SK-MEL-5 (cell line): ENCODE measurements at regions of chr6 and their contacts with region 1.

Region 1: GRCh38 chr6:110873981-110874879 is at the start of gene AMD1:
- DNase-seq: peak; percentile 96
- total RNA-seq, gene AMD1: 76.4 and 82.0 TPM in 2 replicates

Region 2: DNA sequence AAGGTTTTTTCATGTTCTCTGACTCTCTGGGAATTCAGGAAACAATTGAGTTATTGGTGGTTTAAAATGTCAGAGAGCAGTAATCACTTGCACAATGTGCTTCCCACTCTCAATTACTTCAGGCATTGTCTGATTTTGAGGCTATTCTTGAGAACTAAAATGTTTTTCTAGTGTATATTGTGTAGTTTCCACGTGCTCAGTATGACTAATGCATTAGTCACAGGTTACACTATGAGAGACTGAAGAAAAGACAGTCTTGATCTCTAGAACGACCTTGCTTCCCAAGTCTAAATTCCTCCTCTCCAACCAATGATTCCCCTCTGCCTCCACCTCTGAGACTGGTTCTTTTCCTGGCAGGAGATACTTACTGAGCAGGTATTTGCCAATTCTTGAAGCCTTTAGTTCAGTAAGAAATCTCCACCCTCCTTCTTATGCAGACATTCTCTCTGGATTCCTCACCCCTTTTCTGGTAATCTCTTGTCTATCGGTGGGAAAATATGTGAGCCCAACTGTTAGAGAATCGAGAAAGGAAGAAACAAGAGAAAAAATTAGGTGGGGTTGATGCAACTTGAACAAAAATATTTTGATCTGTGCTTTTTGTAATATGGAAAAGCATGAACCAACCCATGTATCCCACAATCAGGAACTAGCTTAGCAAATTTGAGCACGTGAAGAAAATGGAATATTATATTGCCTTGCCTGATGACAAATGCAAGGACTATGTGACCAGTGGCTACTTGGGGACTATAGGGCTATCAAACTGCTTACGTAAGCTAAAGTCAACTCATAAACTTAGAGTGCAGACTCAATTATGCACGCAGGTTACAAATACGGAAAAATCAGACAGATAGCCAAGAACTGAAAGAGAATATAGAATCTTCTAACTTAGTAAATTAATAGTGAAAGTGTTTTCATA is 336.8 kb before region 1 on chr6:
- in situ Hi-C with region 1: loop called (anchors 10 kb)
- DNase-seq: peak; percentile 94

Region 3: DNA sequence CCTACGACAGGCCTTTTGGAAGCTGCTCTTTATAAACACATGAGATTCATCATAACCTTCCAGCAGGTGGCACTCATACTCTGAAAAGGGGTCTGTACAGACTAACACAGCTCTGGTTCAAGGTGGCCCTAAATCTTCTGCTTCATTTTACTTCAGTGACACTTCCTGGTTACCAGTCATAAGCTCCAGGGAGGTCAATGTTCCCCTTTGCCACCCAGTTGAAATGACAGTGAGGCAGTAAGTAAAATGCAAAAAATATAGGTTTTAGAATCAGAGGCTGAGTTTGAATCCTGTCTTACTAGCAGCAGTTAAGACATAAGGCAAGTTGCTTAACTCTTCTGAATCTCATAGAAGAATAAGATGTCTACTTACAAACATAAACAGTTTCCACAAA is 191.8 kb before region 1 on chr6:
- in situ Hi-C with region 1: loop called (anchors 10 kb)
- DNase-seq: peak; percentile 87

Region 4: DNA sequence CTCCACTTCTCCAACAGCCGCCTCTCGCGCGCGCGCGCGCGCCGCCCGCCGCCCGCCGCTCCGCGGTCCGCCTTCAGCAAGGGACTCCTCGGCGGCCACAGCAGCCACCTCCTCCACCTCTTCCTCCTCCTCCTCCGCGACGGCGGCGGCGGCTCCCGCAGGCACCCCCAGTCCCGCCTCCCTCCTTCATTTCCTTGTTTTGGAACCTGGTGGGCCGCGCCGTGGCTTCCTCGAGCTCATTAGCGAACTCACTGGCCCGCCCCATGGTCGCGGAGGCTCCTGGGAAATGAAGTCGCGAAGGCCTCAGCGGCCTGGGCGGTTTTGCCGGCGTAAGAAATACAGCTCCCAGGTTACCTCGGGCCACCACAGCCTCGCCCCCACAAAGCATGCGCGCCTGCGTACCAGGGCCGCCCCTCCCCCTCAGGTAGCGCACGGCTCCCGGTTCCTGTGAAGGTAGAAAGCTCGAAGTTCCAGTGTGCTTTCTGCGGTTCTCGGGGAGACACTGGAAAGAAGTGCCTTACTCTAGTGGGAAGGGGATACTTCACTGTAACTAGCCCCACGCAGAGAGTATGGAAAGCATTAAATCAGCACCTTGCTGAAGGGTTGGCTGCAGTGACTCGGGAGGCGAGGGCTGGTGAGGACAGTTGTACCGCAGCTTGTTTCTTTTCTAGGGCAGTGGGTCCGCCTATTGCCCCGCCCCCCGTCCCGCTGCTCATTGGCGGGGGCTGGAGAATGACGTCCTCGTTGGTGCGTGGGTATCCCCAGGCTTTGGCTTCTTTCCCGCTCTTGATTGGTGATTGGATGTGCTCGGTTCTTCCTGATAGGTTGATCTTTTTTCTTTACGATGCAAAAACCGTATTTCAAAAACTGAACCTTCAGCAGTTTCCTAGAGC is 58.8 kb before region 1 on chr6 and contains the start of gene CDK19:
- in situ Hi-C with region 1: loop called (anchors 10 kb)
- DNase-seq: peak; percentile 99
- total RNA-seq, gene CDK19: 9.2 and 10.6 TPM in 2 replicates